Transverse colon (tissue), 4 donors: ENCODE measurements at regions of chr2 and their contacts with region 1.

Region 1: DNA sequence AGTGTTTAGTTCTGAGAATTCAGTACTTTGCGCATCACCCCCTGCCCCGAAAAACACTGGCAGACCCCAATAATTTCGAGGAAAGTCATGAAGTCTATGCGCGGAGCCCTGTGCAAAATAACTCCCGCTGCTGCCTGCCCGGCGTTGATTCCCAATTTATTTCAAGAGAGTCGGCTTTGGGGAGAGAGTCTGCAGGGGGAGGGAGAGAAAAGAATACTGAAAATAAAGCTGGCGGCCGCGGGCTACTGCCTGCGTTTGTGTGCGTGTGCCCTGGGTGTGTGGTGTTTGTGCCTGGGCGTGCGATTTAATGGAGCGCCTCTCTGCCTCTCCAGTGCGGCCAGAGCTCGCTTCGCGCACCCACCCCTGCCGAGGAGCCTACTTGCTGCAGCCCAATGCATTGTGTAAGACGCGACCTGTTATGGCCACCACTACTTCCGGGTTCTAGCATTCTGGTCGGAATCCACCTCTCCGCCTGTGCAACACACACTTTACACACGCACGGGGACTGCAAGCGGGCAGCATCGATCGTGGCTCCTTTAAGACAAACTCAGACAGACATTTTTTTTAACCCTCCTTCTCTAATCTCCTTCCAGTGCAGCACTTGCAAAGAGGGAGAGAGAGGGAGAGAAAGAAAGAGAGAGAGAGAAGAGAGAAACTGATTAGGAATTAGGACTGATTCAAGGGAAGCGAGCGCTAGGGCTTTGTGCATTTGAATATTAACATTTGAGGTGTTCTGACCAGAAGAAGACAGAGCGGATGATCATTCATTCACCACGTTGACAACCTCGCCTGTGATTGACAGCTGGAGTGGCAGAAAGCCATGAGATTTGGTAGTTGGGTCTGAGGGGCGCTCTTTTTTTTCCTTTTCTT is at the start of gene MEIS1:
- DNase-seq: peak; percentile 80
- H3K4me3 ChIP-seq: peak within 1 kb of the TSS; percentile 48 to 73 (median 68)
- H3K27ac ChIP-seq: peak within 1 kb of the TSS; percentile 91 to 96 (median 93)
- H3K4me1 ChIP-seq: peaks cover 0 to 38% (median 14%) of the 10 kb centered on the region in 4 donors
- H3K27me3 ChIP-seq: peaks cover 97% of the 10 kb centered on the region
- CTCF ChIP-seq: no peak
- EP300 ChIP-seq: no peak
- POLR2A ChIP-seq: peak; percentile 86
- total RNA-seq, gene MEIS1: 25.9 to 129 (median 28.8) TPM

Region 2: GRCh38 chr2:65638443-65638842 is 796.5 kb before region 1 on chr2:
- in situ Hi-C with region 1: no loop called
- intact Hi-C with region 1: loop called (anchors 5 kb)
- DNase-seq: no peak
- H3K4me3 ChIP-seq: no peak overlapping the region
- H3K27ac ChIP-seq: peak overlapping the region in 3 of 4 donors; percentile 18 to 58 (median 27)
- H3K4me1 ChIP-seq: peaks cover 0 to 6% (median 2%) of the 10 kb centered on the region in 4 donors
- H3K27me3 ChIP-seq: peaks cover 21% of the 10 kb centered on the region
- CTCF ChIP-seq: no peak
- EP300 ChIP-seq: no peak
- POLR2A ChIP-seq: no peak

Region 3: DNA sequence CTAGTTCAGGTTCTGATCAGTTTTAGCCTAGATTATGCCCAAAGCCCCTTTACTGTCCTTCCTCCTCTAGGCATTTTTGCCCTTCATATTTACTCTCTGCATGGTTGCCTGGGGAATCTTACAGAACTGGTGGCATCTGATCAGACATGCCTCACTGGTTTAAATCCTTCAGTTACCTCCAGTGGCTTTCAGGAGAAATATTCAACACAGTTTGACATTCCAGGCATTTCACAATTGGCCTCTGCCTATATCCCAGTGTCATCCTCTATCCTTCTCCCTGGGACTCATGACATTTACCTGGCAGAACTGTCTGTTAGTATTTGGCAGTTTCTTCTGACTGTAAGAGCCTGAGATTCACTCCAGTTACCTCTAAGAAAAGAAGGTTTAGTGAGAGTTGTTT is 152.9 kb before region 1 on chr2:
- in situ Hi-C with region 1: no loop called
- intact Hi-C with region 1: no loop called
- DNase-seq: no peak
- H3K4me3 ChIP-seq: no peak overlapping the region
- H3K27ac ChIP-seq: no peak overlapping the region
- H3K4me1 ChIP-seq: no peaks in the 10 kb centered on the region
- H3K27me3 ChIP-seq: no peaks in the 10 kb centered on the region
- CTCF ChIP-seq: no peak
- EP300 ChIP-seq: no peak
- POLR2A ChIP-seq: no peak

Region 4: DNA sequence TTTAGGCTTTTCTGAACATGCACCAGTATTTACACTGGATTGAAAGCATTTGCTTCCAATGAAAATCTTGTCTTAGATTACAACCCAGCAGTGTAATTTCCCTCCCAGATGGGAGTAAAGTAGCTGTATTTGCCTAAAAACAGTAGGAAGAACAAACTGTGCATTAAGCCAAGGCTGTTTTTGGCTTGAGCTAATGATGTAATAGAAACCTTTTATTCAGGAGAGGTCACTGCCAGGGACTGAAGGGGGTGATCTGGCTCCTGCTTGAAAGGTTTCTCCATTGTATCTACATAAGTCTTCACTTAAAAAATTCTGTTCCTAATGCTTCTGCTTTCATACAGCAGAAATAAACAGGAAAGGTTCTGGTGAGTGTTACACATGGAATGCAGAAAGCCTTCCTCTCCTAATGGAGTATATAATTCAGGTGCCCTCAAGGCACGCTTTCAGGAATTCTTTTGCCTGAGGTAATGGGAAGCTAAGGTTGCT is 74.5 kb after region 1 on chr2:
- in situ Hi-C with region 1: no loop called
- intact Hi-C with region 1: no loop called
- DNase-seq: no peak
- H3K4me3 ChIP-seq: no peak overlapping the region
- H3K27ac ChIP-seq: peak overlapping the region; percentile 33 to 69 (median 56)
- H3K4me1 ChIP-seq: peaks cover 3 to 34% (median 21%) of the 10 kb centered on the region in 4 donors
- H3K27me3 ChIP-seq: no peaks in the 10 kb centered on the region
- CTCF ChIP-seq: no peak
- EP300 ChIP-seq: no peak
- POLR2A ChIP-seq: no peak

Region 5: DNA sequence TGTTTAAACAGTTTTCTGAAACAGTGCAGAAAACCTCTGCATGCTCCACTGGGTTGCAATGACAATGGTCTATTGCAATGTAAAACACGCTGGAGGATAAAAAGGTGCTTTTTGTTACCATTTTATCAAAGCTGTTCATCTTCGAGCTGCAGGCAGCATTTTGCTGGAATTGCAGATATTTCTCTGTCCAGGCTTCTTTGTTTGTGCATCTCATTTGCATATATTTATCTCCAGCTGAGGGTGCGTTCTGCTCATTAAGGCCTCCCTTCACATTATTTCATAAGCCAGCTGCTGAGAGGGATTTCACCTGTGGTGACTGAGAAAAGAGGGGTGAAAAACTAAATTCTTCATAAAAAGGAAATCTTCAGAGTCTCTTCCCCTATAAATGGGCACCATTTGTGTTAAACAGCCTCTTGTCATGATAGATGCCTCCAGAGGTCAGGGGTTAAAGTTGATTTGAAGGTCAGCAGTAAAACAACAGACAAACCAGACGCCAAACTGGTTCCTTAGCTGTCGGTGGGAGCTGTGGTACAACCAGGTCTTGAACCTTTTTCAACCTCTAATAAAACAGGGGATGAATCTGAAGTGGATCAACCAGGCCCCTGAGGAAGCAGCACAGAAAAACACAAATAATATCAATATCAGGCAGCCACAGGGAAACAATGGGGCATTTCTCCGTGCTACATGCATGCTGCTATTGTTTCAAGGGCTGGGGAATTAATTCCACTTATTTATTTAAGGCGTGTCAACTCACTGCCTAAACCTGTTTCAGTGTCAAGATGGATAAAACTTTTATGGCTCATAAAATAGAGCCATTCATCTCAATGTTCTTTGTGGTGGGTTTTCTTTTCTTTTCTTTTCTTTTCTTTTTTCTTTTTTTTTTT is 265.1 kb after region 1 on chr2:
- in situ Hi-C with region 1: loop called in 3 of 4 experiments (anchors 10 to 25 kb)
- intact Hi-C with region 1: no loop called
- DNase-seq: no peak
- H3K4me3 ChIP-seq: no peak overlapping the region
- H3K27ac ChIP-seq: peak overlapping the region; percentile 31 to 79 (median 74)
- H3K4me1 ChIP-seq: peaks cover 0 to 18% (median 6%) of the 10 kb centered on the region in 4 donors
- H3K27me3 ChIP-seq: no peaks in the 10 kb centered on the region
- CTCF ChIP-seq: no peak
- EP300 ChIP-seq: no peak
- POLR2A ChIP-seq: no peak

Region 6: GRCh38 chr2:67259581-67260342 is 824.8 kb after region 1 on chr2:
- in situ Hi-C with region 1: loop called in 1 of 4 experiments (anchors 25 kb)
- intact Hi-C with region 1: no loop called
- DNase-seq: peak; percentile 22
- H3K4me3 ChIP-seq: no peak overlapping the region
- H3K27ac ChIP-seq: peak overlapping the region; percentile 70 to 84 (median 79)
- H3K4me1 ChIP-seq: no peaks in the 10 kb centered on the region
- H3K27me3 ChIP-seq: no peaks in the 10 kb centered on the region
- CTCF ChIP-seq: no peak
- EP300 ChIP-seq: peak; percentile 1
- POLR2A ChIP-seq: no peak

Region 7: GRCh38 chr2:67840460-67841068 is 1405.7 kb after region 1 on chr2:
- in situ Hi-C with region 1: loop called in 3 of 4 experiments (anchors 10 to 25 kb)
- intact Hi-C with region 1: loop called (anchors 10 kb)
- DNase-seq: peak; percentile 59
- H3K4me3 ChIP-seq: no peak overlapping the region
- H3K27ac ChIP-seq: no peak overlapping the region
- H3K4me1 ChIP-seq: peaks cover 0 to under 1% (median 0%) of the 10 kb centered on the region in 4 donors
- H3K27me3 ChIP-seq: peaks cover 4% of the 10 kb centered on the region
- CTCF ChIP-seq: peak; percentile 63 to 75 (median 64)
- EP300 ChIP-seq: no peak
- POLR2A ChIP-seq: no peak